SK-N-SH (cell line): ENCODE measurements at regions of chr1 and their contacts with region 1.

Region 1: GRCh38 chr1:47388891-47389238 is 27.2 kb upstream of the FOXE3 start:
- DNase-seq: peak; percentile 80
- H3K4me3 ChIP-seq: no peak overlapping the region
- H3K27ac ChIP-seq: no peak overlapping the region
- H3K4me1 ChIP-seq: peaks cover 0 to 10% of the 10 kb centered on the region in 2 experiments; a peak in 1 of 4 replicates
- H3K27me3 ChIP-seq: no peaks in the 10 kb centered on the region
- CTCF ChIP-seq: peak; percentile 69
- EP300 ChIP-seq: no peak
- RAD21 ChIP-seq: peak; percentile 84

Region 2: DNA sequence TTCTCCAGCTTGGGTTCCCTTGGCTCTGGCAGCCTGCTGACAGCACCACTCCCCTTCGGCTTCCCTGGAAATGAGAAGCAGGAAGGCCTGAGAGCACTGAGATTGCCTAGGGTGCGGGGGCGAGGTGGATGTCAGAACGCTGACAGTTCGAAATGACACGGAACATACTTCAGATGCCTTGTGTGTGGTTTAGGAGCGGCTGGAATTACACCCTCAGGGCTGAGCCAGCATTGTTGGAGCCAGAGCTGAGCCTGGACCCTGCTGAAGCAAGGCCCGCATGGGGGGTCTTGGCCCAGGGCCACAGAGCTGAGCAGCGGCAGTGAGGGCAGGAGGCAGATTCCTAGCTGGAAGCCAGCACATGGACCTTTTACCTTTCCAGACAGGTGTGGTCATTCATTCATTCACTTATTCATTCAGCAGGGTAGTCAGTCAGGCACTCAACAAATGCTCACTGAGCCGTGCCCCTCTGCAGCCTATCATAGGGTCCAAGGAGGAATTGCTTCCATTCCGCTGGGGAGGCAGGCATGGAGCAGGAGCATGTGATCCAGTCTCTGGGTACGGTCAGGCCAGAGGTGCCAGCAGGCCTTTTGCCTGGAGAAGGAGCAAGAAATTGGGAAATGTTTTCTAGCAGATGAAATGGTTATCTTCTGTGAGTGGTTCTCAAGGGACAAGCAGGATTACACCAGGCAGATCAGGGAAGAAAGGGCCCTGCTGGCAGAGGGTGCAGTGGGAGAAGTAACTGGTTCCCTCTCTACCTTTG is 20.6 kb after region 1 on chr1:
- CTCF ChIA-PET with region 1: interaction called, 41 read pairs
- POLR2A ChIA-PET with region 1: no interaction called
- DNase-seq: no peak
- H3K4me3 ChIP-seq: no peak overlapping the region
- H3K27ac ChIP-seq: no peak overlapping the region
- H3K4me1 ChIP-seq: no peaks in the 10 kb centered on the region
- H3K27me3 ChIP-seq: no peaks in the 10 kb centered on the region
- CTCF ChIP-seq: no peak
- EP300 ChIP-seq: no peak
- RAD21 ChIP-seq: no peak

Region 3: DNA sequence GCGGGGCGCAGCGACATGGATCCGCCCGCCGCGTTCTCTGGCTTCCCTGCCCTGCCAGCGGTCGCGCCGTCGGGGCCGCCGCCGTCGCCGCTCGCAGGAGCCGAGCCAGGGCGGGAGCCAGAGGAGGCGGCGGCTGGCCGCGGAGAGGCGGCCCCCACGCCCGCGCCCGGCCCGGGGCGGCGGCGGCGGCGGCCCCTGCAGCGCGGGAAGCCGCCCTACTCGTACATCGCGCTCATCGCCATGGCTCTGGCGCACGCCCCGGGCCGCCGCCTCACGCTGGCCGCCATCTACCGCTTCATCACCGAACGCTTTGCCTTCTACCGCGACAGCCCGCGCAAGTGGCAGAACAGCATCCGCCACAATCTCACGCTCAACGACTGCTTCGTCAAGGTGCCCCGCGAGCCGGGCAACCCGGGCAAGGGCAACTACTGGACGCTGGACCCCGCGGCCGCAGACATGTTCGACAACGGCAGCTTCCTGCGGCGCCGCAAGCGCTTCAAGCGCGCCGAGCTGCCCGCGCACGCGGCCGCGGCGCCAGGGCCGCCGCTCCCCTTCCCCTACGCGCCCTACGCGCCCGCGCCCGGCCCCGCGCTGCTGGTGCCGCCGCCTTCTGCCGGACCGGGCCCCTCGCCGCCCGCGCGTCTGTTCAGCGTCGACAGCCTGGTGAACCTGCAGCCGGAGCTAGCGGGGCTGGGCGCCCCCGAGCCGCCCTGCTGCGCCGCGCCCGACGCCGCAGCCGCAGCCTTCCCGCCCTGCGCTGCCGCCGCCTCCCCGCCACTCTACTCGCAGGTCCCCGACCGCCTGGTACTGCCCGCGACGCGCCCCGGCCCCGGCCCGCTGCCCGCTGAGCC is 27.7 kb after region 1 on chr1:
- CTCF ChIA-PET with region 1: interaction called, 44 read pairs
- POLR2A ChIA-PET with region 1: no interaction called
- DNase-seq: peak; percentile 69
- H3K4me3 ChIP-seq: no peak overlapping the region
- H3K27ac ChIP-seq: no peak overlapping the region
- H3K4me1 ChIP-seq: no peaks in the 10 kb centered on the region; a peak in 1 of 4 replicates
- H3K27me3 ChIP-seq: peaks cover 56% of the 10 kb centered on the region
- CTCF ChIP-seq: no peak
- EP300 ChIP-seq: no peak
- RAD21 ChIP-seq: no peak

Region 4: GRCh38 chr1:47424336-47424982 is 35.6 kb after region 1 on chr1:
- CTCF ChIA-PET with region 1: interaction called, 44 read pairs
- POLR2A ChIA-PET with region 1: no interaction called
- DNase-seq: peak; percentile 65
- H3K4me3 ChIP-seq: no peak overlapping the region
- H3K27ac ChIP-seq: no peak overlapping the region
- H3K4me1 ChIP-seq: no peaks in the 10 kb centered on the region
- H3K27me3 ChIP-seq: peaks cover 18% of the 10 kb centered on the region; the same call in 1 of the 2 replicates
- CTCF ChIP-seq: peak; percentile 81
- EP300 ChIP-seq: no peak
- RAD21 ChIP-seq: peak; percentile 61